CD14-positive monocyte (primary cell): ENCODE measurements at regions of chr14 and their contacts with region 1.

Region 1: DNA sequence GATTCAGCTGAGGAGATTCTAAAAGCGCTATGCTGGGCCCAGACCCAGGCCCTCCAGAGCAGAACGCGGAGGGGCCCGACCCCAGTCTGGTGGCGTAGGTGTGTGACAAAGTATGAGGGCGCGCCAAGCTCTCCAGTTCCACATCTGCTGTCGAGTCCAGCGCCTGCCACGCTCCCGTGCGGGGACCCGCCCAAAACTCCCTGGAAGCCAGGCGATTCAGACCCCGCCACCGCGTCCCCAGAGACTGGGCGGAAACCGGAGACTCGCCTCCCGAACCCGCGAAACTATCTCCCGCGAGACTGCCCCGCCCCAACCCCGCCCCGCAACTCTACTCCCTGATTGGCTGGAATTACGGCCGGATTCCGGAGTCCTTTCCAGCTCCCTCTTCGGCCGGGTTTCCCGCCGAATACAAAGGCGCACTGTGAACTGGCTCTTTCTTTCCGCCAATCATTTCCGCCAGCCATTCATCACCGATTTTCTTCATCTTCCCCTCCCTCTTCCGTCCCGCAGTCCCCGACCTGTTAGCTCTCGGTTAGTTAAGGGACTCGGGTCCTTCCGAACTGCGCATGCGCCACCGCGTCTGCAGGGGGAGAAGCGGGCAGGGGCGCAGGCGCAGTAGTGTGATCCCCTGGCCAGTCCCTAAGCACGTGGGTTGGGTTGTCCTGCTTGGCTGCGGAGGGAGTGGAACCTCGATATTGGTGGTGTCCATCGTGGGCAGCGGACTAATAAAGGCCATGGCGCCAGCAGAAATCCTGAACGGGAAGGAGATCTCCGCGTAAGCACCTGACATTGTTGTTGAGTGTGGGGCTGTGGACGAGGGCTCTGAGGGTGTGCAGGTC is at the start of gene MTHFD1:
- DNase-seq: peak; percentile 94 to 97 (median 94)
- H3K4me3 ChIP-seq: peak within 1 kb of the TSS; percentile 68 to 90 (median 80)
- H3K4me3 Mint-ChIP-seq: peak within 1 kb of the TSS; percentile 99
- H3K27ac ChIP-seq: peak within 1 kb of the TSS; percentile 66 to 82
- H3K27ac Mint-ChIP-seq: peak within 1 kb of the TSS; percentile 85 to 95 (median 93)
- H3K4me1 ChIP-seq: peaks cover 21 to 29% of the 10 kb centered on the region in 2 donors
- H3K4me1 Mint-ChIP-seq: peaks cover 30% of the 10 kb centered on the region
- H3K27me3 ChIP-seq: no peaks in the 10 kb centered on the region
- H3K27me3 Mint-ChIP-seq: peaks cover 0 to 2% (median 0%) of the 10 kb centered on the region in 3 donors
- CTCF ChIP-seq: no peak
- polyA plus RNA-seq, gene MTHFD1: 11.8 to 21.3 (median 14.3) TPM

Region 2: GRCh38 chr14:64279704-64280668 is 107.9 kb before region 1 on chr14:
- intact Hi-C with region 1: no loop called
- DNase-seq: no peak
- H3K4me3 ChIP-seq: no peak overlapping the region
- H3K4me3 Mint-ChIP-seq: peak overlapping the region in 1 of 2 donors; percentile 6
- H3K27ac ChIP-seq: no peak overlapping the region
- H3K27ac Mint-ChIP-seq: no peak overlapping the region
- H3K4me1 ChIP-seq: no peaks in the 10 kb centered on the region
- H3K4me1 Mint-ChIP-seq: no peaks in the 10 kb centered on the region
- H3K27me3 ChIP-seq: no peaks in the 10 kb centered on the region
- H3K27me3 Mint-ChIP-seq: peaks cover 0 to 7% (median 3%) of the 10 kb centered on the region in 3 donors
- CTCF ChIP-seq: no peak

Region 3: GRCh38 chr14:64510825-64511671 is 123.1 kb after region 1 on chr14:
- intact Hi-C with region 1: loop called in 1 of 2 experiments (anchors 2 kb)
- DNase-seq: peak; percentile 65 to 75 (median 75)
- H3K4me3 ChIP-seq: peak overlapping the region in 1 of 3 experiments; percentile 36
- H3K4me3 Mint-ChIP-seq: peak overlapping the region in 1 of 2 donors; percentile 57
- H3K27ac ChIP-seq: peak overlapping the region in 1 of 2 donors; percentile 34
- H3K27ac Mint-ChIP-seq: peak overlapping the region; percentile 41 to 85 (median 55)
- H3K4me1 ChIP-seq: peaks cover 50 to 57% of the 10 kb centered on the region in 2 donors
- H3K4me1 Mint-ChIP-seq: peaks cover 57% of the 10 kb centered on the region
- H3K27me3 ChIP-seq: no peaks in the 10 kb centered on the region
- H3K27me3 Mint-ChIP-seq: peaks cover 0 to 2% (median 2%) of the 10 kb centered on the region in 3 donors
- CTCF ChIP-seq: peak; percentile 94

Region 4: DNA sequence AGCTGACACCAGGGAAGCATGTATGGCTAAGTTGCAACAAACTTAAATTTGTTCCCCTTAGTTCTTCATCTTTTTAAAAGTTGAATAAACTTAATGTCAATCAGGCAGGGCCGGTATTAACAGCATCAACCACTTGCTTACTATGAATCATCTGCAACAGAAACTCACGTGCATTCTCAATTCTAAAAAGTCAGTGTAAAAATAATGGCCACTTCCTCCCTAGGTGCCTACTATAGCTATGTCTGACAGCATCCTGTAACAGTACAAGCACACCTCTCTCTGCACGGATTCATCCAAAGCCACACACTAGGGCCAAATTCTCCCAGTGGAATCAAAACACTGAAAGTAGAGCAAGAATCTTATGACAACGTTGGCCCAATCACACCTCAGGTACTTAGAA is 210.5 kb after region 1 on chr14:
- intact Hi-C with region 1: no loop called
- DNase-seq: no peak
- H3K4me3 ChIP-seq: no peak overlapping the region
- H3K4me3 Mint-ChIP-seq: no peak overlapping the region
- H3K27ac ChIP-seq: no peak overlapping the region
- H3K27ac Mint-ChIP-seq: no peak overlapping the region
- H3K4me1 ChIP-seq: no peaks in the 10 kb centered on the region
- H3K4me1 Mint-ChIP-seq: peaks cover 3% of the 10 kb centered on the region
- H3K27me3 ChIP-seq: peaks cover 3 to 6% of the 10 kb centered on the region in 2 donors
- H3K27me3 Mint-ChIP-seq: peaks cover 7 to 27% (median 9%) of the 10 kb centered on the region in 3 donors
- CTCF ChIP-seq: no peak

Region 5: GRCh38 chr14:64628940-64629408 is 241.1 kb after region 1 on chr14:
- intact Hi-C with region 1: no loop called
- DNase-seq: no peak
- H3K4me3 ChIP-seq: no peak overlapping the region
- H3K4me3 Mint-ChIP-seq: no peak overlapping the region
- H3K27ac ChIP-seq: no peak overlapping the region
- H3K27ac Mint-ChIP-seq: no peak overlapping the region
- H3K4me1 ChIP-seq: peaks cover 14% of the 10 kb centered on the region in 2 donors
- H3K4me1 Mint-ChIP-seq: peaks cover 13% of the 10 kb centered on the region
- H3K27me3 ChIP-seq: no peaks in the 10 kb centered on the region
- H3K27me3 Mint-ChIP-seq: peaks cover 4 to 6% (median 5%) of the 10 kb centered on the region in 3 donors
- CTCF ChIP-seq: no peak

Region 6: GRCh38 chr14:65095619-65096205 is 707.8 kb after region 1 on chr14:
- intact Hi-C with region 1: loop called in 1 of 2 experiments (anchors 10 kb)
- DNase-seq: no peak
- H3K4me3 ChIP-seq: no peak overlapping the region
- H3K4me3 Mint-ChIP-seq: no peak overlapping the region
- H3K27ac ChIP-seq: peak overlapping the region in 1 of 2 donors; percentile 75
- H3K27ac Mint-ChIP-seq: peak overlapping the region in 5 of 7 donors; percentile 8 to 64 (median 44)
- H3K4me1 ChIP-seq: peaks cover 32% of the 10 kb centered on the region in 2 donors
- H3K4me1 Mint-ChIP-seq: peaks cover 50% of the 10 kb centered on the region
- H3K27me3 ChIP-seq: no peaks in the 10 kb centered on the region
- H3K27me3 Mint-ChIP-seq: no peaks in the 10 kb centered on the region
- CTCF ChIP-seq: no peak